Pancreas (tissue), 10 donors: ENCODE measurements at regions of chr1 and their contacts with region 1.

Region 1: DNA sequence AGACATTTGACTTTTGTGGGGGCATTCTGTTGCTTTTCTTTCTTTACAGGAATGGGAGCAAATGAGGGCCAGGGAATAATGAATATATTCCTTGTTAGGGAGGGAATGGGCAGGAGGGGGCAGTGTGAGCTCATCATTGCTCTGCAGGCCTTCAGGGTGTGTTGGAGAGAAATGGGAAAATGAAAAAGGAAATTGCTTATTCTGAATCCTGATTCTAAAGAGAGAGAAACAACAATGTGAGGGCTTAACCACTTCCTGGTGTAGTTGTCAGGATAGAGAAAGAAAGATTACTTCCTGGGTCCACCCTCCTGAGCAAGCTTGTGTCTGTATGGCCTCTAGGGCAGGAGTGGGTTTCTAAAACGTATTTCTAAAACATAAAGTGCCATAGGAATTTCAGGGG is 28.3 kb downstream of the VANGL2 start:
- DNase-seq: peak in 3 of 6 donors; percentile 26 to 69 (median 56)
- ATAC-seq: peak; percentile 90 to 97 (median 96)
- H3K4me3 ChIP-seq: no peak overlapping the region
- H3K27ac ChIP-seq: peak overlapping the region in 1 of 4 donors; percentile 37
- H3K4me1 ChIP-seq: peaks cover 5 to 12% (median 6%) of the 10 kb centered on the region in 3 donors
- H3K27me3 ChIP-seq: no peaks in the 10 kb centered on the region
- CTCF ChIP-seq: peak; percentile 19 to 61 (median 38)

Region 2: GRCh38 chr1:159916184-159917051 is 512.2 kb before region 1 on chr1:
- intact Hi-C with region 1: no loop called
- DNase-seq: peak in 3 of 6 donors; percentile 52 to 57 (median 56)
- ATAC-seq: peak; percentile 54 to 67 (median 60)
- H3K4me3 ChIP-seq: no peak overlapping the region
- H3K27ac ChIP-seq: peak overlapping the region; percentile 25 to 79 (median 57)
- H3K4me1 ChIP-seq: peaks cover 17 to 57% (median 28%) of the 10 kb centered on the region in 3 donors
- H3K27me3 ChIP-seq: no peaks in the 10 kb centered on the region
- CTCF ChIP-seq: no peak

Region 3: GRCh38 chr1:160607011-160607671 is 178.5 kb after region 1 on chr1:
- intact Hi-C with region 1: loop called (anchors 5 to 10 kb)
- DNase-seq: peak in 3 of 6 donors; percentile 39 to 74 (median 51)
- ATAC-seq: peak; percentile 92 to 100 (median 98)
- H3K4me3 ChIP-seq: no peak overlapping the region
- H3K27ac ChIP-seq: no peak overlapping the region
- H3K4me1 ChIP-seq: no peaks in the 10 kb centered on the region
- H3K27me3 ChIP-seq: no peaks in the 10 kb centered on the region
- CTCF ChIP-seq: peak; percentile 56 to 67 (median 64)

Region 4: DNA sequence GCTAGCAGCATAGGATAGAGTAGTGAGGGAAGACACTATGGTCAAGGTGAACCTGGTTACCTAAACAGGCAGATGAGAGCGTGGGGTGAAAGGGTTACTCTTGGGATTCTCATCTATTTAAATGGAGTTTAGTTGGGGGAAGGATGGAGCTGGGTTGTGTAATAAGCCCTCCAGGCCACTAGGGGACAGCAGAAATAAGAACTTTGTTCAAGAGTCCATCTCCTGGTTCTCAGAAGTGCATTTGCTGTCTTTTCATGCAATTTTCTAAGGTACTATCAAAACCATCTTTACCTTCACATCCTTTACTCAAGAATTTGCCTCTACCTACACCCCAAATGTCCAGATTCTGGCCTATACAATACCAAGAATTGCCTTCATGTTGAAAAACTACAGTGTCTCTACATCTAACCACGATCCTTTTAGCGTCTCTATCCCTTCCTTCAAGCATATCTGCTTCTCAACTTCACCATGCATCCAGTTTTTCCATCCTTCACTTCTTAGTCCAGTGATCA is 190.2 kb after region 1 on chr1:
- intact Hi-C with region 1: loop called in 1 of 3 experiments (anchors 10 kb)
- DNase-seq: no peak
- ATAC-seq: no peak
- H3K4me3 ChIP-seq: no peak overlapping the region
- H3K27ac ChIP-seq: no peak overlapping the region
- H3K4me1 ChIP-seq: no peaks in the 10 kb centered on the region
- H3K27me3 ChIP-seq: no peaks in the 10 kb centered on the region
- CTCF ChIP-seq: peak in 2 of 4 donors; percentile 16 to 23